Psoas muscle (tissue), 8 donors: ENCODE measurements at regions of chr12 and their contacts with region 1.

Region 1: DNA sequence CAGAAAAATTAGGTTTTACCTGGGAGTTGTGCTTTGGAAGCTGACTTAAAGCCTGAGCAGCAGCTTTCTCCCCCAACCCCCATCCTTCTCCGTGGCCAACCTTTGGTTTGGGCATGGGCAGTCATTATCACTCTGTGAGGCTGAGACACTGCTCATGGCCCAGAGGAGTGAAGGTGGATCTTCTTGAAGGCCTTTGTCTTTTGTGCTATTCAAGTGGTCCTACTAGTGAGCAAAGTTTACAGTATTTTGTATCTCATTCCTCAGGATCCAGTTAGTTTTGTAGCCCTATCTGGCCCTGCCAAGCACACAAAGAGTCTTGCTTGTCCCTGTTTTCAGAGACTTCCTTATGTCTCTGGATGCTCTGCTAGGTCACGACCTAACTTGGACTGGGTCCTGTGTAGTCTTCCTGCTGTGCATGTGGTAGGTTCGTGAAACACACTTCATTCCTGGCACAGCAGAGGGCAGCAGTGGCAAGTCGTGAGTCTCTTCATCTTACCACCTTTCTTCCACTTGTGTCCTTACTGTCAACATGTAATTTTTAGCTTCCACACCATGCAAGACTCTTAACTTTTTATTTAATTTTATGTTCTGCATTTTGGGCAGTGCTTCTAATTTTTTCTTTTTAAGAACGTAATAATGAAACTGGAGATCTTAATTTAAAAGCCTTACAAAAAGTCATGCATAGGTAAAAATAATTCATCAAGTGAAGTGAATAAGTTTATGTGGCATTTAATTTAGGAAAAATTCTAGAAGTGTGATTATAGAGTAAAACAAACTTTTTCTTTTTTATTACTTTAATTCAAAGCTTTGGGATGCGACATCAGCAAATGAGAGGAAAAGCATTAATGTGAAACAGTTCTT is 53.7 kb downstream of the APAF1 start:
- DNase-seq: peak; percentile 39 to 54
- ATAC-seq: peak; percentile 51 to 87 (median 78)
- H3K4me3 ChIP-seq: no peak overlapping the region
- H3K27ac ChIP-seq: no peak overlapping the region
- H3K4me1 ChIP-seq: no peaks in the 10 kb centered on the region
- H3K27me3 ChIP-seq: no peaks in the 10 kb centered on the region
- CTCF ChIP-seq: peak; percentile 50

Region 2: GRCh38 chr12:98998697-98999299 is 300.0 kb after region 1 on chr12:
- intact Hi-C with region 1: loop called (anchors 2 to 10 kb)
- DNase-seq: no peak
- ATAC-seq: peak; percentile 64 to 89 (median 78)
- H3K4me3 ChIP-seq: no peak overlapping the region
- H3K27ac ChIP-seq: no peak overlapping the region
- H3K4me1 ChIP-seq: peaks cover 4% of the 10 kb centered on the region
- H3K27me3 ChIP-seq: no peaks in the 10 kb centered on the region
- CTCF ChIP-seq: peak; percentile 75

Region 3: GRCh38 chr12:99005601-99006000 is 306.8 kb after region 1 on chr12:
- intact Hi-C with region 1: loop called in 1 of 2 experiments (anchors 10 kb)
- DNase-seq: no peak
- ATAC-seq: no peak
- H3K4me3 ChIP-seq: no peak overlapping the region
- H3K27ac ChIP-seq: no peak overlapping the region
- H3K4me1 ChIP-seq: no peaks in the 10 kb centered on the region
- H3K27me3 ChIP-seq: no peaks in the 10 kb centered on the region
- CTCF ChIP-seq: no peak